ENCODE measurements at regions of chr4 and their contacts with region 1.

Region 1: DNA sequence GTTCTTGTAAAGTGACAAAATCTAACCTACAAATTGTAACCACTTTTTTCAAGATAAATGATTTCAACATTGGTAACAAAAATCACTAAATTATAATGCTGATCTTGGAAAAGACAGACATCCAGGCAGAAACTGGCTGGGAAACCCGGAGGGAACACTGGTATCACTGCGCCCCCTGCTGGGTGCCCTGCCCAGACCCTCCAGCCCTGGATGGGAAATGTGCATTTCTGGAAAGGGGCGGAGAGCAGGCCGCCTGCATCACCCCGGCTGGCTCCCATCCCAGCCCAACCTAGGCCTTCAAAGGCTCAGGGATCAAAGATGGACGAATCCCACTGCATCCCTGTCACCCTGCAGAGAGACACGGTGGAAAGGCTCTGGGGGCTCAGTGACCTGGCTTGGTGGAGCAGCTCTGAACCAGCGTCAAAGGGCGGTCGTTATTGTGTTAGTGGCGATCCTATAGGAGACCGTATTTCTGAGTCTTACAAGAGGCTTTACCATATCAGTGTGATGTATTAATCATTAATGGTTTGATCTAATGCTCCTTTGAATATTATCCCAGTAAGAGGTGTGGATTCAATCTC is 37.3 kb downstream of the ACOX3 start:
- DNase-seq: peak; percentile 96
- H3K4me3 ChIP-seq: no peak overlapping the region
- H3K27ac ChIP-seq: peak overlapping the region in 1 of 2 experiments; percentile 66; a peak in 2 of 4 replicates
- H3K4me1 ChIP-seq: peaks cover 0 to 14% of the 10 kb centered on the region in 2 experiments; a peak in 1 of 4 replicates
- H3K27me3 ChIP-seq: no peaks in the 10 kb centered on the region
- CTCF ChIP-seq: peak; percentile 98
- EP300 ChIP-seq: no peak
- RAD21 ChIP-seq: peak; percentile 99

Region 2: DNA sequence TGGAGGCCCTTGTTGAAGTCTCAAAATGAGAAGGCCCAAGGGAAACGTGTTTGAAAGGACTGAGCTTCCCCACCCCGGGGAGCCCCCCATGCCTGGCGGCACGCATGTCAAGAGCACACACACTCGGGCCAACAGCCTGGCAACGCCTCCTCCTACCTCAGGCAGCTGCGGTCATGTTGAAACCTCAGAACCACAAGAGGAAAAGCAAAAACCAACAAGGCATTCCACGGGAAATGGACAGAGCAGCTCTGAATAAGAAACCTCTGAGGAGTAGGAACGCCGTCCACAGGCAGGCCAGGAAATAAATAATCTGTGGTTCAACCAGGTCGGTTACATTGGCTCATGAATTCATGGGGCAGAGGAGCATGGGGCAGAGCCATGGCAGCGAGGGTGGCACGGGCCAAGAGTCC is 367.9 kb before region 1 on chr4:
- CTCF ChIA-PET with region 1: no interaction called
- POLR2A ChIA-PET with region 1: no interaction called
- DNase-seq: no peak
- H3K4me3 ChIP-seq: no peak overlapping the region
- H3K27ac ChIP-seq: no peak overlapping the region
- H3K4me1 ChIP-seq: peaks cover 0 to 35% of the 10 kb centered on the region in 2 experiments; a peak in 1 of 4 replicates
- H3K27me3 ChIP-seq: peaks cover 7% of the 10 kb centered on the region; the same call in 1 of the 2 replicates
- CTCF ChIP-seq: no peak
- EP300 ChIP-seq: no peak
- RAD21 ChIP-seq: no peak

Region 3: DNA sequence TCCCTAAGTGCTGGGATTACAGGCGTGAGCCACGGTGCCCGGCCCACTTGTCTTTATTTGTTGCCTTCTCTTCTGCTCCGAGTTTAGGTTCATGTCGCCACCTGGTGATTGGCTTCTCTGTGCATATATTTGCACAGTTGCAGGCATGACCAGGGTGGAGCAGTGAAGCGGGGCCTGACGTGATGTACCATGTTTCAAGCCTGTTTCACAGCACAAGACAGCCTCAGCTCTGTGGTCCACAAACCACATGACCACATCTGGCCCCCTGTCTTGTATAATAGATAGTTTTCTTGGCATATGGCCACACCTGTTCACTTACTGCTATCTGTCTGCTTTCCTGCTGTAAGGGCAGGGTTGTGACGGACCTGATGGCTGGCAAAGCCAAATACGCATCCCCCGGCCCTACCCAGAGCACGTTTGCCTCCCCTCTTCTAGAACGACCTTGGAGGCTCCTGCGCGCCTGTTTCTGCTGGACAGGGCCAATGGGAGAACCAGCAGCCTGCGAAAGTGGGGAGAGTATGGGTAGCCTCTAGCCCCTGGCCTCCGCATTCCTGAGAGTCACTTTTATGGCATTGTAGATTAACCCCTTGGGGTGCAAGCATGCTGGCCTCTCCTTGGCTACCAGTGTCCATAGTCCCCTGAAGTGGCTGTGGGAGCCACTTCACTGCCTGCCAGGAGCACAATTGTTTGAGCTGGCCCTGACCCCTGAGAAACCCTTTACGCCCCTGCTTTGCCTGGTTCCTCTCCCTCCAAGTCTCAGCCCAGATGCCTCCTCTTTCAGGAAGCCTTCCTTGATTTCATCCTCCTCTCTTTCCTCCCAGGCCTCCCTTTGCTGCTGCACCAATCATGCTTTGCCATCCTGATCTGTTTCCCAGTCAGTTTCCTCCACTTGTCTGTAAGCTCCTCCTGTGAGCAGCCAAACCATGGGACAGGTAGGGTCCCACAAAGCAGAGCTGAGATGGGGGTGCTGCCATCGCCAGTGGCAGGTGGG is 210.2 kb before region 1 on chr4:
- CTCF ChIA-PET with region 1: interaction called, 13 read pairs
- POLR2A ChIA-PET with region 1: no interaction called
- DNase-seq: peak; percentile 78
- H3K4me3 ChIP-seq: no peak overlapping the region
- H3K27ac ChIP-seq: peak overlapping the region in 1 of 2 experiments; percentile 23; a peak in 1 of 4 replicates
- H3K4me1 ChIP-seq: peaks cover 0 to 25% of the 10 kb centered on the region in 2 experiments; a peak in 1 of 4 replicates
- H3K27me3 ChIP-seq: no peaks in the 10 kb centered on the region
- CTCF ChIP-seq: peak; percentile 14; the same call in 1 of the 2 replicates
- EP300 ChIP-seq: 0 out of 4 replicates have a peak, but pooled peaks of 1 of the 2 experiments have one; percentile 30
- RAD21 ChIP-seq: peak; percentile 58

Region 4: DNA sequence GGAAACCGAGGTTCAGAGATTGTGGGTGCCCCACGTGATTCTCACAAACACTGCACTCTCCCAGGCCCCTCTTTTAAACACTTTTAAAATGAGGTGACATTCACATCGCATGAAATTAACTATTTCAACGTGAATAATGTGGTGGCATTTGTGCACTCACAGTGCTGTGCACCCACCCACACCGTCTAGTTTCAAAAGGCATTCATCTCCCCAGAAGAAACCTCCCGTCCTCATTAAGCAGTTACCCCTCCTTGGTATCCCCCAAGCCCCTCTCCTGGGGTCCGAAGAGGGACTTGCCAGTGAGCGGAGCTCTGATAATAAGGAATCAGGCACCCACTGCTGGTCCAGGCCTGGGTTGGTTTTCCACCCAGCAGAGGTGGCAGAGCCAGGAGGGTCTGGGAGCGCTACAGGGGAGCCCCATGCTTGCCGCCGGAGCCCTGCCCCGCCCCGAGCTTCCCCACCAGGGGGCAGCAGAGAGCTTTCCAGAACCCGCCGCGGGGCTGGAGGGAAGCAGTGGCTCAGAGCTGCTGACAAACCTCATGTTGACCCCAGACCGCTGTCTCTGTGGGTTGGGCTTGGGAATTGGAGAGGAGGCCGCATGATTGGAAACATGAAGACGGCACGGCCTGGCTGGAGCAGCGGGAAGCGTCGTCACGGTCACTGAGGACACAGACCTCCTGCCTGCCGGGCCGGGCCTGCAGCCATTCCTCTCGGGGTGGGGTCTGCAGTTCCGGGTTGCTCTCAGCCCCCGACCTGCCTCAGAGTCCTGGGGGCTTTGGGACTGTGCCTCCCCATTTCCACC is 161.2 kb before region 1 on chr4:
- CTCF ChIA-PET with region 1: interaction called, 115 read pairs
- POLR2A ChIA-PET with region 1: no interaction called
- DNase-seq: peak; percentile 98
- H3K4me3 ChIP-seq: peak overlapping the region in 1 of 2 experiments; percentile 44; a peak in 1 of 4 replicates
- H3K27ac ChIP-seq: peak overlapping the region in 1 of 2 experiments; percentile 73; a peak in 1 of 4 replicates
- H3K4me1 ChIP-seq: peaks cover 4 to 8% of the 10 kb centered on the region in 2 experiments; a peak in 1 of 4 replicates
- H3K27me3 ChIP-seq: no peaks in the 10 kb centered on the region
- CTCF ChIP-seq: peak; percentile 93
- EP300 ChIP-seq: no peak
- RAD21 ChIP-seq: peak; percentile 94

Region 5: GRCh38 chr4:8267077-8267476 is 136.2 kb before region 1 on chr4:
- CTCF ChIA-PET with region 1: interaction called, 18 read pairs
- POLR2A ChIA-PET with region 1: no interaction called
- DNase-seq: peak; percentile 73
- H3K4me3 ChIP-seq: no peak overlapping the region
- H3K27ac ChIP-seq: peak overlapping the region in 1 of 2 experiments; percentile 16; a peak in 1 of 4 replicates
- H3K4me1 ChIP-seq: peaks cover 0 to 29% of the 10 kb centered on the region in 2 experiments; a peak in 1 of 4 replicates
- H3K27me3 ChIP-seq: no peaks in the 10 kb centered on the region
- CTCF ChIP-seq: peak; percentile 46
- EP300 ChIP-seq: no peak
- RAD21 ChIP-seq: peak; percentile 40

Region 6: GRCh38 chr4:8289956-8290700 is 113.1 kb before region 1 on chr4:
- CTCF ChIA-PET with region 1: interaction called, 10 read pairs
- POLR2A ChIA-PET with region 1: no interaction called
- DNase-seq: no peak
- H3K4me3 ChIP-seq: no peak overlapping the region
- H3K27ac ChIP-seq: no peak overlapping the region
- H3K4me1 ChIP-seq: peaks cover 0 to 15% of the 10 kb centered on the region in 2 experiments; a peak in 1 of 4 replicates
- H3K27me3 ChIP-seq: no peaks in the 10 kb centered on the region
- CTCF ChIP-seq: no peak
- EP300 ChIP-seq: no peak
- RAD21 ChIP-seq: no peak

Region 7: GRCh38 chr4:8376361-8376760 is 26.9 kb before region 1 on chr4:
- CTCF ChIA-PET with region 1: no interaction called
- POLR2A ChIA-PET with region 1: no interaction called
- DNase-seq: peak; percentile 58
- H3K4me3 ChIP-seq: no peak overlapping the region
- H3K27ac ChIP-seq: no peak overlapping the region; a peak in 1 of 4 replicates
- H3K4me1 ChIP-seq: peaks cover 0 to 14% of the 10 kb centered on the region in 2 experiments; a peak in 1 of 4 replicates
- H3K27me3 ChIP-seq: no peaks in the 10 kb centered on the region
- CTCF ChIP-seq: no peak
- EP300 ChIP-seq: no peak
- RAD21 ChIP-seq: no peak